Posterior vena cava (tissue), 2 donors: ENCODE measurements at regions of chr7 and their contacts with region 1.

Region 1: DNA sequence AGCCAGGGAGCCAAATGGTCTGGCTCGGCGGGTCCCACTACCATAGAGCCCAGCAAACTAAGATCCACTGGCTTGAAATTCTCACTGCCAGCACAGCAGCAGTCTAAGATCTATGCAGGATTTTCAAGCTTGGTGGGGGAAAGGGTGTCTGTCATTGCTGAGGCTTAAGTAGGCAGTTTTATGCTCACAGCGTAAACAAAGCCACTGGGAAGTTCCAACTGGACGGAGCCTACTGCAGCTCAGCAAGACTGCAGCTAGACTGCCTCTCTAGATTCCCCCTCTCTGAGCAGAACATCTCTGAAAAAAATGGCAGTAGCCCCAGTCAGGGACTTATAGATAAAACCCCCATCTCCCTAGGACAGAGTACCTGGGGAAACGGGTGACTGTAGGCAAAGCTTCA is 277.6 kb upstream of the PHF14 start:
- DNase-seq: no peak

Region 2: GRCh38 chr7:10677211-10677610 is 18.9 kb before region 1 on chr7:
- intact Hi-C with region 1: loop called in 1 of 2 experiments (anchors 1 kb)
- DNase-seq: no peak

Region 3: DNA sequence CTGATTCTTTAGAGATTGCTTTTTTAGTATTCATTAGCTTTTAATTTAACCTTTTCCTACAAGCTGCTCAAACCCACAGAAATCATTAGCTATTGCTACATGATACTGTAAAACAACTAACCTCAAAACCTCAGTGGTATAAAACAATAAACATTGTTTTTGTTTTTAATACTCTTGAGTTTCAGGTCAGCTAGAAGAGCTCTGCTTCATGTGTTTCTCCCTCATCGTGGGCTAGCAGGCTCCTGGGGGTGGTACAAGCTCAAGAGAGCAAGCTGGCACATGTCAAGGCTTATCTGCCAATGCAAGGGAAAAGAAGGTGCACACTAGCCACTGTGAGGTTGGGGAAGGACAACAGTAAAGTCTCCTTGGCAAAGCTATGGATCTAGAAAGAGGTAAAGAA is 44.7 kb after region 1 on chr7:
- intact Hi-C with region 1: no loop called
- DNase-seq: no peak